Activated CD4-positive, alpha-beta T cell treated with anti-CD3 and anti-CD28 coated beads, Interleukin-2, amount 10 ng/mL, durations not matched to agents 24 days and 14 days (primary cell): ENCODE measurements at regions of chr9 and their contacts with region 1.

Region 1: GRCh38 chr9:121213136-121213806 is 11.6 kb upstream of the RAB14 start:
- DNase-seq: peak; percentile 90
- H3K4me3 Mint-ChIP-seq: no peak overlapping the region
- H3K27ac Mint-ChIP-seq: no peak overlapping the region
- H3K4me1 Mint-ChIP-seq: peaks cover 16% of the 10 kb centered on the region
- H3K27me3 Mint-ChIP-seq: no peaks in the 10 kb centered on the region

Region 2: GRCh38 chr9:121038804-121039203 is 174.5 kb before region 1 on chr9:
- intact Hi-C with region 1: no loop called
- DNase-seq: no peak
- H3K4me3 Mint-ChIP-seq: no peak overlapping the region
- H3K27ac Mint-ChIP-seq: no peak overlapping the region
- H3K4me1 Mint-ChIP-seq: no peaks in the 10 kb centered on the region
- H3K27me3 Mint-ChIP-seq: peaks cover 6% of the 10 kb centered on the region

Region 3: GRCh38 chr9:121278535-121279261 is 65.4 kb after region 1 on chr9:
- intact Hi-C with region 1: loop called (anchors 5 kb)
- DNase-seq: peak; percentile 82
- H3K4me3 Mint-ChIP-seq: no peak overlapping the region
- H3K27ac Mint-ChIP-seq: peak overlapping the region; percentile 8
- H3K4me1 Mint-ChIP-seq: peaks cover 14% of the 10 kb centered on the region
- H3K27me3 Mint-ChIP-seq: peaks cover 2% of the 10 kb centered on the region

Region 4: GRCh38 chr9:121399883-121400607 is 186.8 kb after region 1 on chr9:
- intact Hi-C with region 1: loop called (anchors 1 kb)
- DNase-seq: peak; percentile 68
- H3K4me3 Mint-ChIP-seq: no peak overlapping the region
- H3K27ac Mint-ChIP-seq: no peak overlapping the region
- H3K4me1 Mint-ChIP-seq: no peaks in the 10 kb centered on the region
- H3K27me3 Mint-ChIP-seq: peaks cover 18% of the 10 kb centered on the region